ENCODE measurements at regions of chr12 and their contacts with region 1.

Region 1: GRCh38 chr12:107131832-107132616 is 38.7 kb upstream of the CRY1 start:
- DNase-seq: peak; percentile 65
- H3K4me3 ChIP-seq: no peak overlapping the region
- H3K27ac ChIP-seq: no peak overlapping the region
- H3K4me1 ChIP-seq: no peaks in the 10 kb centered on the region
- H3K27me3 ChIP-seq: peaks cover 0 to 2% of the 10 kb centered on the region in 2 experiments
- CTCF ChIP-seq: peak; percentile 68 to 76
- POLR2A ChIP-seq: no peak

Region 2: DNA sequence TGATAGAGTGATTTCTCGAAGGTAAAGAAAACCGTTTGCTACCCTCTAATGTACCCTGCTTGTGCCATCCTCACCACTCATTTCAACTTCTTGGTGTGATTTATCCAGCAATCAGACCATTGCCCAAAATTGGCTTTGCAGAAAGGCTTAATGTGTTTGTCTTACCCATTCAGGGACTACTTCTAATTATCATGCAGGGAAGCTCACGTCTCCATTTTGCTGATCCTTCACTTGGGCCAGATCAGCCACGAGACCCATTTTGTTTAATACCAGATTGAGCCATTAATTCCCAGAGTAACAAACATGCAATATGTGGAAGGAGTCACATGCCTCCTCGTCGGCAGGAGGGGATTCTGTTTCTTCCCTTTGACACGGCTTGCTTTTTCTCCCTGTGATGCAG is 12.4 kb after region 1 on chr12:
- CTCF ChIA-PET with region 1: interaction called, 11 read pairs
- POLR2A ChIA-PET with region 1: no interaction called
- dilution Hi-C with region 1: no loop called
- intact Hi-C with region 1: no loop called
- DNase-seq: no peak
- H3K4me3 ChIP-seq: no peak overlapping the region
- H3K27ac ChIP-seq: no peak overlapping the region
- H3K4me1 ChIP-seq: no peaks in the 10 kb centered on the region
- H3K27me3 ChIP-seq: no peaks in the 10 kb centered on the region
- CTCF ChIP-seq: no peak
- POLR2A ChIP-seq: no peak

Region 3: GRCh38 chr12:107393043-107393717 is 261.2 kb after region 1 on chr12:
- CTCF ChIA-PET with region 1: interaction called, 15 read pairs
- POLR2A ChIA-PET with region 1: no interaction called
- dilution Hi-C with region 1: no loop called
- intact Hi-C with region 1: no loop called
- DNase-seq: peak; percentile 11
- H3K4me3 ChIP-seq: no peak overlapping the region
- H3K27ac ChIP-seq: no peak overlapping the region
- H3K4me1 ChIP-seq: no peaks in the 10 kb centered on the region
- H3K27me3 ChIP-seq: no peaks in the 10 kb centered on the region
- CTCF ChIP-seq: no peak
- POLR2A ChIP-seq: no peak

Region 4: GRCh38 chr12:107448198-107448597 is 316.2 kb after region 1 on chr12:
- CTCF ChIA-PET with region 1: interaction called, 10 read pairs
- POLR2A ChIA-PET with region 1: no interaction called
- dilution Hi-C with region 1: no loop called
- intact Hi-C with region 1: no loop called
- DNase-seq: no peak
- H3K4me3 ChIP-seq: no peak overlapping the region
- H3K27ac ChIP-seq: no peak overlapping the region
- H3K4me1 ChIP-seq: no peaks in the 10 kb centered on the region
- H3K27me3 ChIP-seq: no peaks in the 10 kb centered on the region
- CTCF ChIP-seq: peak; percentile 16 to 41
- POLR2A ChIP-seq: no peak

Region 5: DNA sequence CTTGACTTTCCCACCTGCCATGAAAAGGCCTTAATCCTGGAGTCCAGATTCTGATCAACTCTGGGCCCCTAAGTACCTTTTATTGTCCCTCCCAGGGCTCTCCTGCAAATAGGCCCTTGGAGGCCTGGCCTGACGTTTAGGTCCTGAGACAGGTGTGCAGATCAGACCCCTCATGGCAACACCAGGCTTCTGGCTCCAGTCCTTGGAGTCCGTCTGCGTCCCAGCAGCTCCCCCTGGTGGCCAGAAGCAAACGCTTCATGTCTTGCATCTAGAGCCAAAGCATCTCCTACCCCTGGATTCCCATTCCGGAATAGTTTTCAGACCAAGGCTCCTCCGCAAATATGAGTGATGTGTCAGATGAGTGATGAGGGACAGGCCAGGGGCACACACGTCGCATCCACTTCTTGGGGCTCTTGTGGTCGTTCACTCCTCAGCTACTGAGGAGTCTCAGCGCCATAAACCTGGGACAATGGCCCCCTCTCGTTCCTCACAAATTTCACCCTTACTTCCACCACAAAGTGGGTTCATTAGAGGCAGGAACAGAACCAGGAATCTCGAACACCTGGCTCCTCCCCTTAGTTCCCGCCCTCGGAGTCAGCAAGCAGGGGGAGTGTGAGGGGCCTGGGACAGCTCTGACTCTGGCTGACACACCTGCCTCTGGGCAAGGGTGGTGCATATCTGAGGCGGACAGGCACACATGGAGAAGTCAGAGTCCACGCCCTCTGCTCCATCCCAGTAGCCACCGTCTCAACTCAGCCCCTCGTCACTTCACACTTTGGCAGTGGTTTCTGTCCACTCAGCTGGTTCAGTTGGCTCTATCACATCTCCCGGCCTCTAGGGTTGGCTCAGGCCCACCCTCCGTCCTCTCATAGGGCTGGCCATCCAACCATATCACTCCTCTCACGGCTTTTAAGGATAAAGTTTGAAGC is 475.7 kb after region 1 on chr12:
- CTCF ChIA-PET with region 1: interaction called, 296 read pairs
- POLR2A ChIA-PET with region 1: no interaction called
- dilution Hi-C with region 1: loop called (anchors 25 kb)
- intact Hi-C with region 1: loop called (anchors 1 kb)
- DNase-seq: peak; percentile 62
- H3K4me3 ChIP-seq: no peak overlapping the region
- H3K27ac ChIP-seq: no peak overlapping the region
- H3K4me1 ChIP-seq: no peaks in the 10 kb centered on the region
- H3K27me3 ChIP-seq: no peaks in the 10 kb centered on the region
- CTCF ChIP-seq: peak; percentile 89 to 94
- POLR2A ChIP-seq: no peak

Region 6: DNA sequence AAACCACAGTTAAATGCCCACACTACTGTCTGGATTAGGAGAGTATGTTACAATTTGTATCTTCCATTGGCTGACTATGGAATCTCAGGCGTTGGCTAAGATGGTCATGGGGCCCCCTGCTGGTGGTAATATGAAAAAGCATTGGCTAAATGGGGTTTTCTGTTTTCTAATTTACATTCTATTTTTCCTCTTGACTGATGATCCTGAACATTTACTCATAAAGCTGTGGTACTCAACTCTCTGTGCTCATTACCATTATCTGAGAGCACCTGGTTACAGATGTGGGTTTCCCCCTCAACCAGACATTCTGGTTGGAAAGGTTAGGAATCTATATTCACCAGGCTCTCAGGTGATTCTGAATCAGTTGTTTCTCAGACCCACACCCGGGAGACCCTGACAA is 1061.9 kb after region 1 on chr12:
- CTCF ChIA-PET with region 1: no interaction called
- POLR2A ChIA-PET with region 1: no interaction called
- dilution Hi-C with region 1: no loop called
- intact Hi-C with region 1: no loop called
- DNase-seq: peak; percentile 21
- H3K4me3 ChIP-seq: no peak overlapping the region
- H3K27ac ChIP-seq: no peak overlapping the region
- H3K4me1 ChIP-seq: no peaks in the 10 kb centered on the region
- H3K27me3 ChIP-seq: no peaks in the 10 kb centered on the region
- CTCF ChIP-seq: peak; percentile 65
- POLR2A ChIP-seq: no peak

Measured in endothelial cell of umbilical vein (primary cell).